OCI-LY7 (cell line): ENCODE measurements at regions of chr14 and their contacts with region 1.

Region 1: GRCh38 chr14:32710731-32711680 is 227.7 kb upstream of the NPAS3 start:
- DNase-seq: peak; percentile 60
- H3K4me3 ChIP-seq: no peak overlapping the region
- H3K27ac ChIP-seq: no peak overlapping the region
- H3K4me1 ChIP-seq: no peaks in the 10 kb centered on the region
- CTCF ChIP-seq: peak; percentile 88

Region 2: GRCh38 chr14:33432407-33433023 is 721.5 kb after region 1 on chr14:
- CTCF ChIA-PET with region 1: no interaction called
- POLR2A ChIA-PET with region 1: no interaction called
- intact Hi-C with region 1: loop called (anchors 10 kb)
- DNase-seq: peak; percentile 41
- H3K4me3 ChIP-seq: no peak overlapping the region
- H3K27ac ChIP-seq: no peak overlapping the region
- H3K4me1 ChIP-seq: no peaks in the 10 kb centered on the region
- CTCF ChIP-seq: peak; percentile 79